Common myeloid progenitor, CD34-positive (primary cell): ENCODE measurements at regions of chr19 and their contacts with region 1.

Region 1: GRCh38 chr19:4732680-4733114 is 9.1 kb upstream of the DPP9 start:
- DNase-seq: peak; percentile 75 to 87 (median 84)
- H3K4me3 ChIP-seq: no peak overlapping the region
- H3K27ac ChIP-seq: no peak overlapping the region
- H3K4me1 ChIP-seq: peaks cover 0 to 3% (median 1%) of the 10 kb centered on the region in 4 experiments
- H3K27me3 ChIP-seq: peaks cover 0 to 3% (median 0%) of the 10 kb centered on the region in 5 experiments

Region 2: GRCh38 chr19:4768934-4769777 is 36.5 kb after region 1 on chr19:
- CTCF ChIA-PET with region 1: no interaction called
- POLR2A ChIA-PET with region 1: no interaction called
- DNase-seq: peak; percentile 92 to 96 (median 94)
- H3K4me3 ChIP-seq: no peak overlapping the region
- H3K27ac ChIP-seq: no peak overlapping the region
- H3K4me1 ChIP-seq: no peaks in the 10 kb centered on the region
- H3K27me3 ChIP-seq: peaks cover 0 to 6% (median 0%) of the 10 kb centered on the region in 5 experiments

Region 3: DNA sequence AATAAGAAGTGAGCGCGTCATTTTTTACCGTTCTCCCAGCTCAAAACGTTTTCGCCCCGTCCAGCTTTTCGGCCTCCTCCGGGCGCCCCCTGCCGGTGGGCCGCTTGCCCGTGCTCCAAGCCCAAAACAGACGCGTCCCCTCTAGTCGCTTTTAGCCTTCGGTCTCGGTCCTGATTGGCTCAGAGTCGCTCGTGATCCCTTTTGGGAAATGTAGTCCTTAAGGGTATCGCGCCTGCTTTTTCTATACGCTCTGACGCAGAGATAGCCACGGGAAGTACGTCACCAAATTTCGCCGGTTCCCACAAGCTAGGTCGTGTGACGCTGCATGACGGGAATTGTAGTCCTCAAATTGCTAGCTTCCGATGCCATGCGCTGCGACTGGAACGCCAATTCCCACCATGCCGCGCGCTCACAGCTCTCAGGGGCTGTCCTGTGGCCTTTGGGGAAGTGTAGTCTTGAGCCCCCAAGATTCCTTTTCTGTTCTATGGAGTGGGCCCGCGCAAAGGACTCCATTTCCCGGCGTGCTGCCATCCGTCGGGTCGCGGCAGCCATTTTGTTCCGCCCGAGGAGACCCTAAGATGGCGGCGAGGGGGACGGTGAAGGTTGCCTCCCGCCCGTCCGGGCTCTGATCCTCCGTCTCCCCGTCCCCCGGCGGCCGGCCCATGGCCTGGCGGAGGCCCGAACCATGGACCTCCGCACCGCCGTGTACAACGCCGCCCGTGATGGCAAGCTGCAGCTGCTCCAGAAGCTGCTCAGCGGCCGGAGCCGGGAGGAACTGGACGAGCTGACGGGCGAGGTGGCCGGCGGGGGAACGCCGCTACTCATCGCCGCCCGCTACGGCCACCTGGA is 58.7 kb after region 1 on chr19 and contains the start of gene FEM1A:
- CTCF ChIA-PET with region 1: interaction called, 35 read pairs
- POLR2A ChIA-PET with region 1: no interaction called
- DNase-seq: peak; percentile 100
- H3K4me3 ChIP-seq: peak within 1 kb of the TSS; percentile 64 to 90 (median 83)
- H3K27ac ChIP-seq: peak within 1 kb of the TSS; percentile 89 to 96
- H3K4me1 ChIP-seq: peaks cover 0 to 26% (median 16%) of the 10 kb centered on the region in 4 experiments
- H3K27me3 ChIP-seq: peaks cover 0 to 3% (median 2%) of the 10 kb centered on the region in 5 experiments

Region 4: DNA sequence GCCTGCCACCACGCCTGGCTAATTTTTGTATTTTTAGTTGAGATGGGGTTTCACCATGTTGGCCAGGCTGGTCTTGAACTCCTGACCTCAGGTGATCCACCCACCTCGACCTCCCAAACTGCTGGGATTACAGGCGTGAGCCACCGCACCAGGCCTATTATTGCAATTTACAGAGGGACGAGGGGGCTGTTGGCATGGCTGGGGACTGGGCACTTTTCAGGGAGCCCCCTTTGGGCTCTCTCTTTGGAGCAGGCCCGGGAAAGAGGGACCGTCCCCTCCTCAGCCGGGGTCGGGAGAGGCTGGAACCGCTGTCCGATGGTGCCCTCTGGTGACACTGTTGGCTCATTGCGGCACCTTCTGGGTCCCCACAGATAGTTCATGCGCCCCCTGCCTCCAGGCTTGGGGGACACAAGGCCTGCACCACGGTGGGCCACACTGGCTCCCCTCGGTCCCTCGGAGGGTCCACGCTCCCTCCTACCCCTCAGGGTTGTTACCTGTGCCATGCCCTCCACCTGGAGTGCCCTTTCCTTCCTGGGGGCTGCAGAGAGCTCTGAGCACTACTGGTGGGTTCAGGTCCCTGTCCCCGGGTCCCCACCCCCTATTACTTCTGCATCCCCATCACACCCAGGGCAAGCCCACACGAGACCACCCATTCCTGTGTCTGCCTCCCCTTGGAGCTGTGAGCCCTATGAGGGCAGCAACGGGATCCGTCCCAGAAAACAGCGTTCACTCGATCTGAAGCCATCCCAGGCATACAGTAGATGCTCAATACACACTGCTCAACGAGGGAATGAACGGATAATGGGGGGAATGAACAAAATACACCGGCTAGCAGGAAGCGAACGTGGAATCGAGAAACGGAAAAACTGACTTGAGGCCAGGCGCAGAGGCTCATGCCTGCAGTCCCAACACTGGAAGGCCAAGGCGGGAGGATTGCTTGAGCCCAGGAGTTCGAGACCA is 71.3 kb after region 1 on chr19:
- CTCF ChIA-PET with region 1: interaction called, 75 read pairs
- POLR2A ChIA-PET with region 1: no interaction called
- DNase-seq: peak; percentile 76 to 83 (median 79)
- H3K4me3 ChIP-seq: peak overlapping the region in 1 of 7 experiments; percentile 8
- H3K27ac ChIP-seq: no peak overlapping the region
- H3K4me1 ChIP-seq: peaks cover 0 to 20% (median 3%) of the 10 kb centered on the region in 4 experiments
- H3K27me3 ChIP-seq: no peaks in the 10 kb centered on the region